ENCODE measurements at regions of chr1 and their contacts with region 1.

Region 1: GRCh38 chr1:109112652-109113285 is 1.1 kb upstream of the ELAPOR1 start:
- DNase-seq: peak; percentile 83
- H3K27ac ChIP-seq: no peak overlapping the region
- CTCF ChIP-seq: peak; percentile 82

Region 2: GRCh38 chr1:109090196-109091077 is 22.3 kb before region 1 on chr1 and contains the start of gene TMEM167B:
- CTCF ChIA-PET with region 1: interaction called, 11 read pairs
- POLR2A ChIA-PET with region 1: no interaction called
- DNase-seq: peak; percentile 81
- H3K27ac ChIP-seq: peak within 1 kb of the TSS; percentile 94
- CTCF ChIP-seq: no peak

Region 3: GRCh38 chr1:109099938-109100773 is 12.6 kb before region 1 on chr1:
- CTCF ChIA-PET with region 1: interaction called, 15 read pairs
- POLR2A ChIA-PET with region 1: interaction called, 6 read pairs
- DNase-seq: peak; percentile 96
- H3K27ac ChIP-seq: peak overlapping the region; percentile 89
- CTCF ChIP-seq: peak; percentile 89

Region 4: GRCh38 chr1:109167001-109167506 is 54.3 kb after region 1 on chr1:
- CTCF ChIA-PET with region 1: no interaction called
- POLR2A ChIA-PET with region 1: no interaction called
- DNase-seq: no peak
- H3K27ac ChIP-seq: no peak overlapping the region
- CTCF ChIP-seq: no peak

Measured in RWPE1 (cell line).